Activated naive CD4-positive, alpha-beta T cell treated with anti-CD3 and anti-CD28 coated beads for 36 hours (primary cell): ENCODE measurements at regions of chr14 and their contacts with region 1.

Region 1: GRCh38 chr14:41609704-41610183 is 3.1 kb downstream of the LRFN5 start:
- DNase-seq: no peak
- H3K4me3 Mint-ChIP-seq: no peak overlapping the region
- H3K27ac Mint-ChIP-seq: no peak overlapping the region
- H3K4me1 Mint-ChIP-seq: peaks cover 38% of the 10 kb centered on the region
- H3K27me3 Mint-ChIP-seq: peaks cover 71% of the 10 kb centered on the region

Region 2: DNA sequence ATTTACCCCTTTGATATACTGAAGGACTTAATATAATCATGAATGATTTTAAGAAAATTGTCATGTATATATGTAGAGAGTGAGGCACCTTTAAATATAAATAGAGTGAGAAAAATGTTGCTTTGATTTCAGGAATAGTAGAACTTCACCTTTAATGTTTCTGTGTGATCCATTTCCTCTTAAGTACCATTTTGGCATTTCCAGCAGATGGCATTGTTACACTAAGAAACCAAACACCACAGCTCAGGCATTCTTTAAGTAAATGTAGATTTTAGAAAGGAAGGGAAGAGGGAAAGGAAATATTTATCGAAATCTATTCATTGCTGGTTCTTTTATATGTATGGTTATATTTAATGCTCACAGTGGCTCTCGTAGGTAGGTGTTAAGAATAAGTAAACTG is 1620.8 kb before region 1 on chr14:
- CTCF ChIA-PET with region 1: no interaction called
- intact Hi-C with region 1: loop called (anchors 5 kb)
- DNase-seq: no peak
- H3K4me3 Mint-ChIP-seq: no peak overlapping the region
- H3K27ac Mint-ChIP-seq: no peak overlapping the region
- H3K4me1 Mint-ChIP-seq: no peaks in the 10 kb centered on the region
- H3K27me3 Mint-ChIP-seq: no peaks in the 10 kb centered on the region

Region 3: DNA sequence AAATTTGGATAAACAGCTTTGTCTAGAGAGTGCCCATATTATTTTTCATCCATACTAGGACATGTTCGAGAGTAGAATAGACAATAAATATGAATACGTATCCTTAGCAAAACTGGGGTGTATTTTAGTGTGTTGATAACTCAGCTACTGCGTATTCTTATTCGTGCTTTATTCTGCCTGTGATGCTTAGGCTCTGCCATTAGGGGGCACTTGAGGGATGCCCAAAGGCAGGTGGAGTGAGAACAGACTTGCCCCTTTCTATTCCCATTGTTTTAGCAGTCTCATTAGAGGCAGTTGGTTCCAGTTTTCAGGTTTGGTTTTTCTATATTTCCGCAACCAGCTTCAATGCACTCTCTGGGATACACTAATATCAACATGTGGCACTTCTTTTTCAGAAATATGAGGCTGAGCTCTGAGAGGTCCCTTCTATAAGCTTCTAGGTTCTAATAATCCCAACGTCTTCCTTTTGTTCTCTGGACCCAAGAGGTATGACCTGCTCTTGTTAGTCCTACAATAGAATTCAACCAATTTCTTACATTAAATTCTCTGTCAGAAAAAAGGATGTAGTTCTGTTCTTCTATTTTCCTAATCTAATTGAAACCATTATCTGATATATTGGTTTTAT is 1191.9 kb before region 1 on chr14:
- CTCF ChIA-PET with region 1: no interaction called
- intact Hi-C with region 1: loop called (anchors 5 kb)
- DNase-seq: peak; percentile 38
- H3K4me3 Mint-ChIP-seq: no peak overlapping the region
- H3K27ac Mint-ChIP-seq: no peak overlapping the region
- H3K4me1 Mint-ChIP-seq: no peaks in the 10 kb centered on the region
- H3K27me3 Mint-ChIP-seq: no peaks in the 10 kb centered on the region

Region 4: GRCh38 chr14:41785696-41786095 is 176.0 kb after region 1 on chr14:
- CTCF ChIA-PET with region 1: no interaction called
- intact Hi-C with region 1: loop called (anchors 5 kb)
- DNase-seq: peak; percentile 6
- H3K4me3 Mint-ChIP-seq: no peak overlapping the region
- H3K27ac Mint-ChIP-seq: no peak overlapping the region
- H3K4me1 Mint-ChIP-seq: no peaks in the 10 kb centered on the region
- H3K27me3 Mint-ChIP-seq: no peaks in the 10 kb centered on the region